Tibial artery (tissue), 4 donors: ENCODE measurements at regions of chr20 and their contacts with region 1.

Region 1: GRCh38 chr20:46132705-46133120 is 14.6 kb downstream of the CD40 start:
- DNase-seq: peak; percentile 48 to 74
- H3K4me3 ChIP-seq: no peak overlapping the region
- H3K27ac ChIP-seq: no peak overlapping the region
- H3K4me1 ChIP-seq: peaks cover 0 to 14% (median 5%) of the 10 kb centered on the region in 4 donors
- H3K27me3 ChIP-seq: peaks cover 0 to 61% of the 10 kb centered on the region in 2 donors
- CTCF ChIP-seq: peak; percentile 55 to 65

Region 2: DNA sequence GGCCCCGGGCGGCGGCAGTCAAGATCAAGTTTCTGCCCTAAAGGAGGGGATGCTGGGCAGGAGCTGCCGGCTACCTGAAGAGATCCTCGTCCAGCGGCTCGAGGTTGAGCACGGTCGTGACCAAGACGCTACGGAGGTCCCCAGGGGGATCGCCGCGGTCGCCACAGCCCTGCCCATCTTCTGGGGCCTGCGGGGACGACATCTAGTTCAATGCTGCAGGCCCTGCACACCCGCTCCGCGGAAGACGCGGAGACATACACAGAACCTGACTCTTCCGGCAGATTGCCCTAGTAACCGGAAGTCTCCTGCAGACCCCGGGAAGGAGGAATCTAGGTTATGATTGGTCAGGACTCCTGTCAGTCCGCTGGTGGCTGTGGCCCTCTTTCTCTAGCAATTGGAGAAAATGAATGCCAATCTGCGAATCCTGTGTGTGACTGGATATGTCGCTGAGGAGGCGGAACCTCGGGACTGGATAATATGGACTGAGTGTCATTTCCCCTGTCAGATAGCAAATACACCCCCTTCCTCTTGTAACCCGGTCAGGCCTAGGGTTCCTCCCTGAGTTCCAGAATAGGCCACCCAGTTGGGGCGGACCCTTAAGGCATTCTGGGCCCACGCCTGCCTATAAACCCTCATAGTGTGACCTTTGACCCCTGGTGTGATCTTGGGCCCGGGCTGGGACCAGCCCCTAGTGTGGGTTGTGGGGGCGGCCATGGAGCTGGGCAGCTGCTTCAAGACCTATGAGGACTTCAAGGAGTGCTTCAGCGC is 275.4 kb before region 1 on chr20 and contains the starts of genes ACOT8 and ZSWIM3:
- intact Hi-C with region 1: no loop called
- DNase-seq: peak; percentile 98 to 99
- H3K4me3 ChIP-seq: peak within 1 kb of the TSS; percentile 63 to 64
- H3K27ac ChIP-seq: peak within 1 kb of the TSS; percentile 68 to 75
- H3K4me1 ChIP-seq: peaks cover 0 to 38% (median 31%) of the 10 kb centered on the region in 4 donors
- H3K27me3 ChIP-seq: no peaks in the 10 kb centered on the region
- CTCF ChIP-seq: peak in 1 of 2 experiments; percentile 7

Region 3: DNA sequence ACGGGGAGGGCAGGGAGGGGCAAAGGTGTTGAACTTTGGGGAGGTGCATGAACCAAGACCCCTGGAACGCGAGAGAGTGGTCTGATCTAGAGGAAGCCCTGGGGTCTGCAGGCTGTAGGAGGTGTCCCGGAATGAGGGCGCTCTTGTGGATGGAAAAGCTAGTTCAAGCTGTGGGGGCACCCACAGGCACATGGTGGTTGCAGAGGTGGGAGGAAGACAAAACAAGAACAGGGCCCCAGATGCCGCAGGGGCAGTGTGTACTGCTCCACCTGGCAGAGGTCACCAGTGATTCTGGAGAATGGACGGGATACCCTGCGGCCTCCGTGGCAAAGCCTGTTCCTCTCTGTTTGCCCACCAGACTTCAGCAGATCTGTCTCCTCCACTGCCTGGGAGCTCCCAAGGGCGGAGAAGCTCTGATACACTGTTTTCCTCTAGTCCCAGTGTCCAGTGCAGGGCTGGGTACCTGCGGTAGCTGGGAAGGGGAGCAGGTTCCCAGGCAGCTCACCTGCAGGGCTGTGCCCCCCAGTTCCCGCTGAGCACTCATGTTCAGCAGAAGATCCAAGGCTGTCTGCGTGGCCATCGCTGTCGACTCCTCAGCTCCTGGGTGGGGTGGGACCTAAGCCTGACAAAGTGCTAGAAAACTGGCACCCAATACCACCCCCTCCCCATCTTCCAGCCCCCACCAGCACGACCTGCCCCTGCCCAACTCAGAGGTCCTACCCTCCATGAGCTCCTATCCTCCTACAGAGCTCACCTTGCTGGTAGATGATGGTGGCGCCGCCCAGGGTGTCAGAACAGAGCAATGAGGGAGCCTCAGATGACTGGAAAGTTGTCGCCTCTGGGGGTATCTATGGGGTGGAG is 175.4 kb before region 1 on chr20:
- intact Hi-C with region 1: no loop called
- DNase-seq: peak; percentile 19 to 55
- H3K4me3 ChIP-seq: no peak overlapping the region
- H3K27ac ChIP-seq: no peak overlapping the region
- H3K4me1 ChIP-seq: no peaks in the 10 kb centered on the region
- H3K27me3 ChIP-seq: no peaks in the 10 kb centered on the region
- CTCF ChIP-seq: no peak

Region 4: DNA sequence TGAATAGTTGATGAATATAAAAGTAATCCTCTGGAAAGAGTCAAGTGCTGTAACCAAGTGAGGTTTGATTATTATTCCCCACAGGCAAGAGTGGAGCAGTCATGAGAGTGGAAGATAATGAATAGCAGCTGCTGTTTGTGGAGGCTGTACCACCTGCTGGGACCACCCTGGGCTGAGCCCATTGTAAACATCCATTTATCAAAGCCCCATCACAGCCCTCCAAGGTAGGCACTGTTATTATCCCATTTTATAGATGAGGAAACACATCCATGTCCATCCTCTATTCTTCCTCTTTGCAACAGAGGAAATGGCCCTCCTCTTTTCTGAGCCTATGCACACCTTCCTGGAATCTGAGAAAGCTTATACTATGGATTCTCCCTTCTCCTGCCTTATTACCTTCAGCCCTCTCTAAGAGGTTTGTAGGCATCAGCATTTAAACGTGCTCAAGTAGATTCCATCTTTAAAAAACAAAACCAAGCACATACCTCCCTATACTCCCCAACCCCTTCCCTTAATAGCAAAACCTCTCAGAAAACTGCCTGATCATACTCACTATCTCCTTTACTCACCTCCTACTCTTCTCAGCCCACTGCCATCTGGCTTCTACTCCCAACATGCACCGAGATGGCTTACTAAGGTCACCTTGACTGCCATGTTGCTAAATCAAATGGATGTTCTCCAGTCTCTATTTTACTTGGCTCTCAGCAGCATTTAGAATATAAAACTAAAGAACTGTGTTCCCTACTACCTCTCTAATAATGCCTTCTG is 138.4 kb after region 1 on chr20:
- intact Hi-C with region 1: loop called (anchors 10 kb)
- DNase-seq: no peak
- H3K4me3 ChIP-seq: no peak overlapping the region
- H3K27ac ChIP-seq: no peak overlapping the region
- H3K4me1 ChIP-seq: no peaks in the 10 kb centered on the region
- H3K27me3 ChIP-seq: peaks cover 0 to 54% of the 10 kb centered on the region in 2 donors
- CTCF ChIP-seq: no peak

Region 5: DNA sequence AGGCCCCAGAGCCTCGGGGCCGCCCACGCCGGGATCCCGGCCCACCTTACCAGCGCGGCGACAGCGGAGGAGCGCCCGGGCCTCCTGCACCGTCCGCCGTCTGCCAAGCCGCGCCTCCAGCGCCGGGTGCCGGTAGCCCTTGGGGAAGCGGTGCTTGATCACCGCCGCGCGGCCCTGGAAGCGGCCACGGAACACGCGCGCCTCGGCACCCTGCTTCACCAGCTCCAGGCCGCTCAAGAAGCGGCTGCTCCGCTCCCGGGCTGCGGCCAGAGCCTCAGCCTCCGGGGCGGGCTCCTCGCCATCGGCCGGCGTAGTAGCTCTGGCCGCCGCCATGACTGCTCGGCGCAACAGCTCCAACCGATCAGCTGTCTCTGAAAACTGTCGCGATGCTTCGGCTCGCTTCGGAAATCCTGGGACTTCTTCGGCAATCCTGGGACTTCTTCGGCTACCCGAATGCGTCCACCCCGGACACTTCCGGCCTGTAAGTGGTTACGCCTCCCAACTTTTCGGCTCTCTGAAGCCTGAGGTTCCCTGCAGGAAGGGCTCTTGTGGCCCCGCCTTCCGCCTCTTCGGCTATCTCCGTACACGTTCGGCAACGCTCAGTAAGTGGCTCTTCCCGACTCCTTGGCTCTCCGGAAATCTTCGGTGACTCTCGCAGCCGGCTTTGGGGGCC is 556.5 kb after region 1 on chr20 and contains the start of gene TP53RK:
- intact Hi-C with region 1: loop called (anchors 10 kb)
- DNase-seq: peak; percentile 99 to 100
- H3K4me3 ChIP-seq: peak within 1 kb of the TSS; percentile 76 to 92
- H3K27ac ChIP-seq: peak within 1 kb of the TSS; percentile 89 to 94
- H3K4me1 ChIP-seq: peaks cover 0 to 38% (median 17%) of the 10 kb centered on the region in 4 donors
- H3K27me3 ChIP-seq: no peaks in the 10 kb centered on the region
- CTCF ChIP-seq: peak; percentile 56 to 65